ENCODE measurements at regions of chr1 and their contacts with region 1.

Region 1: GRCh38 chr1:16122916-16123315 is 33.0 kb downstream of the EPHA2 start:
- DNase-seq: peak; percentile 96
- H3K4me3 Mint-ChIP-seq: no peak overlapping the region
- H3K27ac Mint-ChIP-seq: peak overlapping the region; percentile 67
- H3K4me1 Mint-ChIP-seq: peaks cover 32% of the 10 kb centered on the region
- H3K27me3 Mint-ChIP-seq: no peaks in the 10 kb centered on the region
- CTCF ChIP-seq: no peak

Region 2: GRCh38 chr1:16139473-16139962 is 16.6 kb after region 1 on chr1:
- CTCF ChIA-PET with region 1: no interaction called
- POLR2A ChIA-PET with region 1: interaction called, 53 read pairs
- intact Hi-C with region 1: no loop called
- DNase-seq: peak; percentile 94
- H3K4me3 Mint-ChIP-seq: peak overlapping the region; percentile 26
- H3K27ac Mint-ChIP-seq: peak overlapping the region; percentile 63
- H3K4me1 Mint-ChIP-seq: peaks cover 53% of the 10 kb centered on the region
- H3K27me3 Mint-ChIP-seq: no peaks in the 10 kb centered on the region
- CTCF ChIP-seq: no peak

Region 3: GRCh38 chr1:16146279-16147155 is 23.6 kb after region 1 on chr1:
- CTCF ChIA-PET with region 1: no interaction called
- POLR2A ChIA-PET with region 1: interaction called, 53 read pairs
- intact Hi-C with region 1: no loop called
- DNase-seq: peak; percentile 80
- H3K4me3 Mint-ChIP-seq: peak overlapping the region; percentile 69
- H3K27ac Mint-ChIP-seq: peak overlapping the region; percentile 53
- H3K4me1 Mint-ChIP-seq: peaks cover 57% of the 10 kb centered on the region
- H3K27me3 Mint-ChIP-seq: no peaks in the 10 kb centered on the region
- CTCF ChIP-seq: no peak